Activated CD4-positive, alpha-beta T cell treated with anti-CD3 and anti-CD28 coated beads, Interleukin-2, amount 10 ng/mL, durations not matched to agents 7 days and 5 days (primary cell): ENCODE measurements at regions of chr3 and their contacts with region 1.

Region 1: DNA sequence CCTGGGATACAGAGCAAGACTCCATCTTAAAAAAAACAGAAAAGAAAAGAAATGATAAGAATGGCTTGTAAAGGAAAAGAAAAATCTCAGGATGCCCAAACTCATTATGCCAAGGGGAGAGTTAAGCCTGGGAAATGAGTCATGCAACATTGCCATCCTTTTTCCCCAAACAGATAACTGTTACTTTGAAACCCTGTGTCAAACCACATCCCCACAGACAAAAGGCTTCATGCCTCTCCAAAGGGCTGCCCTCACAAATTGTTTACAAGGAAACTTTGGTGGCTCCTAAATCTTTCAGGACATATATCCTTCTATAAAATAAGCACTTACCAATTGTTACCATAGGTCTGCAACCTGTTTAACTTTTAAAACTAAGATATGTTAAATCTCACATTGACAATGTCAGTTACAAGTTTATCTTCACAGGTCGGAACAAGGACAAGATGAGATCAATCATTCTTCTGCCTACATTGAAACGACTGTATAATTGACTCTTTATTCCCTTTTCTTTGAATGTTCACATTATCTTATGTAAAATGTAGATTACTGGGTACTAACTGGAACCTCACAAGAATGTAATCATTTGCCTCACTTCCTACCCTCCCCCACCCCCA is 18.6 kb upstream of the SENP7 start:
- DNase-seq: peak; percentile 29
- H3K4me3 Mint-ChIP-seq: no peak overlapping the region
- H3K27ac Mint-ChIP-seq: peak overlapping the region; percentile 42
- H3K4me1 Mint-ChIP-seq: peaks cover 35% of the 10 kb centered on the region
- H3K27me3 Mint-ChIP-seq: no peaks in the 10 kb centered on the region

Region 2: GRCh38 chr3:101501783-101502182 is 29.8 kb before region 1 on chr3:
- CTCF ChIA-PET with region 1: no interaction called
- POLR2A ChIA-PET with region 1: no interaction called
- DNase-seq: no peak
- H3K4me3 Mint-ChIP-seq: no peak overlapping the region
- H3K27ac Mint-ChIP-seq: no peak overlapping the region
- H3K4me1 Mint-ChIP-seq: peaks cover 19% of the 10 kb centered on the region
- H3K27me3 Mint-ChIP-seq: no peaks in the 10 kb centered on the region

Region 3: DNA sequence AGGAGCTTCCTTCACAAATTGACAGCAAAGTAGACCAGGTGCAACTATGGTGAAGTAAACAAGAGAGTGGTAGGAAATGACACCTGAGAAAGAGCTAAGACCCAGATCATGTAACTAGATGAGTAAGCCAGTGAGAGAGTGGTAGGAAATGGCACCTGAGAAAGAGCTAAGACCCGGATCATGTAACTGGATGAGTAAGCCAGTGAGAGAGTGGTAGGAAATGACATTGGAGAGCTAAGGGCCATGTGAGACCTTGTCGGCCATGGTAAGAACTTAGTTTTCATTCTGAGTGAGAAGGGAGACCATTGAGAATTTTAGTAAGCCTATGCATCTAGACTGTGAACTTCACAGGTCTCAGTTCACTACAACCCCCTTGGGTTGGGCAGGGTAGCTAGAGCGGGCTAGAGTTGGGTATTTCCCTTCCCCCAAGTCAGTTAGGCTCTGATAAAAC is 13.1 kb before region 1 on chr3:
- CTCF ChIA-PET with region 1: interaction called, 13 read pairs
- POLR2A ChIA-PET with region 1: no interaction called
- DNase-seq: peak; percentile 57
- H3K4me3 Mint-ChIP-seq: peak overlapping the region; percentile 31
- H3K27ac Mint-ChIP-seq: peak overlapping the region; percentile 89
- H3K4me1 Mint-ChIP-seq: peaks cover 59% of the 10 kb centered on the region
- H3K27me3 Mint-ChIP-seq: no peaks in the 10 kb centered on the region